Activated T-helper 2 cell treated with anti-CD3 and anti-CD28 coated beads, Interferon-gamma antibody, Interleukin-2, Interleukin-4, amounts not matched to agents 10 μg/mL and 5 μg/mL and 100 μg/mL, durations not matched to agents 14 hours and 24 hours and 36 hours (primary cell): ENCODE measurements at regions of chr14 and their contacts with region 1.

Region 1: DNA sequence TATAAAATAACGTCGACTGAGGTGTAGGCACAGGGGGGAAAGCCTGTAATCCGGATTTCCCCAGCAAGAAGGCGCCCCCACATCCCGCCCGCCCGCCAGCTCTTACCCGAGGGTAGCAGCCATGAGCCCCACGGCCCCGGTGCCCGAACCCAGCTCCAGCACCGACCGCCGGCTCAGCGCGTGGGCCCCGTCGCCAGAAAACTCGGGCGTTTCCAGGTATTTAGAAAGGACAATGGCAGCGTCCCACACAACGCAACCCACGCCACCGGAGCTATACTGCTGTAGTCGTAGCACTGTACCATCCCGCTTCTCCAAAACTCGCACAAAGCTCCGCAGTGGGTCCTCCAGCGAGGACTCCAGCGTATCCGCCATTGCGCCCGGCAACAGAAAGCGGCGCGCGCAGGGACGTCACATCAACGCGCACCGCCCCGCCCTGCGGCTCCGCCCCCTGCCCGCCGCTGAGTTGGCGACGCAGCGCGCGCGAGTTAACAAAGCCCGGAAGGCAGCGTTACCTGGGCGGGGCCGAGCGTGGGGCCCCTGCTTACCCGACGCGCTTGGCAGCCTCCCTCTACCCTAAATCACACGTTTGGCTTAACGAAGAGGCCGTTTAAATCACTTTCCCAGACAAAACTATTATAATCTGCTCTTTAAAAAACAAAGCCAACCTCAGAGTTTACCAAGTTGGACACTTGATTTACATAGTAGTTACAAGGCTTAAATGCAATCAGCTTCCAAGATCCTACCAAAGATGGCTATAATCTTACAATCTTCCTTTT is at the start of gene VCPKMT:
- DNase-seq: peak; percentile 94
- H3K4me3 Mint-ChIP-seq: peak within 1 kb of the TSS; percentile 97
- H3K27ac Mint-ChIP-seq: peak within 1 kb of the TSS; percentile 98
- H3K4me1 Mint-ChIP-seq: peaks cover 17% of the 10 kb centered on the region
- H3K27me3 Mint-ChIP-seq: no peaks in the 10 kb centered on the region
- total RNA-seq, gene VCPKMT: 9.7 and 10.1 TPM in 2 replicates

Region 2: DNA sequence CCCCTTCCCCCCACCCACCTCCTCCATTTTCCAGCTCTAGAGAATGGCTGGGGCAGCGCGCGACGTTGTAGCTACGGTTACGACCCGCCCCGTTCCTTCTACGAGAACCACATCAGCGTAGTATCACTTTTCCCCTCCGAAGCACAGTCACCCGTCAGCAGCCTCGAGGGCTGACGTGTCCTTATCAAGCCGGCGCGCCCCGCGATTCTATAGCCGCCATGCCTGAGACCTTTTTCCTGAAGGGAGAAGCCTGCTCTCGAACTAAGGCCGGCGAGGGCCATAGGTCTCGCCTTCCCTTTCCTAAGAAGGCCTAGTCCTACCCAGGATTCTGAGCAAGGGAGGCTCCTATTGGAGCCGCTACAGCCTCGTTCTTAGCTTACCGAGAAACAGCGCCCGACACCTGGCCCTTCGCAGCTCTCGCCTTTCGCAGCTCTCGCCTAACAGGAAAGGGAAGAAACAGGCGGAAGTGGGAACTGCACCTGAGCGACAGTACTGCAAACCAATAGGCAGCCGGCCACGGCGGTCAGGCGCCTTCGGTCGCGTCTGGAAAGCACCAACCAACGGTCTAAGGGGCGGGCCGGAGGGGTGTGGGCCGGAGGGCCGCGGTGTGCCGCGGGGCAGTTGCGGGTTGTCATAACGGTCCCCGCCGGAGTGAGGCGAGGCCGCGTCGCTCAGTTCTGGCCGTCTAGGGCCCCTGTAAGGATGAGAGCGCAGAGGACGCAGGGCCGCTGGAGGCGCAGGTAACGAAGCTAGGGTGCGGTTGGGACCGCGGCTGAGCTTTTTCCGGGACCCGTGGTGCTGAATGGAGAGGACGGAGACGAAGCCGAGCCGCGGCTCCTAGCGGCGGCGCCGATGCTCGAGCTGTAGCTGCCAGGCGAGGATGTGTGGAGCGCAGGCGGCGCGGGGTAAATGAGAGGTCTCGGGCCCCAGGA is 495.9 kb before region 1 on chr14 and contains the starts of genes MGAT2 and RPL36AL:
- intact Hi-C with region 1: loop called (anchors 5 kb)
- DNase-seq: peak; percentile 96
- H3K4me3 Mint-ChIP-seq: peak within 1 kb of the TSS; percentile 91
- H3K27ac Mint-ChIP-seq: peak within 1 kb of the TSS; percentile 94
- H3K4me1 Mint-ChIP-seq: peaks cover 44% of the 10 kb centered on the region
- H3K27me3 Mint-ChIP-seq: no peaks in the 10 kb centered on the region
- total RNA-seq, gene MGAT2: 57.0 and 57.9 TPM in 2 replicates
- total RNA-seq, gene RPL36AL: 278 and 292 TPM in 2 replicates

Region 3: GRCh38 chr14:49767562-49768300 is 348.6 kb before region 1 on chr14 and contains the start of gene KLHDC2:
- intact Hi-C with region 1: loop called (anchors 2 kb)
- DNase-seq: peak; percentile 89
- H3K4me3 Mint-ChIP-seq: peak within 1 kb of the TSS; percentile 96
- H3K27ac Mint-ChIP-seq: peak within 1 kb of the TSS; percentile 100
- H3K4me1 Mint-ChIP-seq: peaks cover 31% of the 10 kb centered on the region
- H3K27me3 Mint-ChIP-seq: no peaks in the 10 kb centered on the region
- total RNA-seq, gene KLHDC2: 28.9 and 31.6 TPM in 2 replicates

Region 4: DNA sequence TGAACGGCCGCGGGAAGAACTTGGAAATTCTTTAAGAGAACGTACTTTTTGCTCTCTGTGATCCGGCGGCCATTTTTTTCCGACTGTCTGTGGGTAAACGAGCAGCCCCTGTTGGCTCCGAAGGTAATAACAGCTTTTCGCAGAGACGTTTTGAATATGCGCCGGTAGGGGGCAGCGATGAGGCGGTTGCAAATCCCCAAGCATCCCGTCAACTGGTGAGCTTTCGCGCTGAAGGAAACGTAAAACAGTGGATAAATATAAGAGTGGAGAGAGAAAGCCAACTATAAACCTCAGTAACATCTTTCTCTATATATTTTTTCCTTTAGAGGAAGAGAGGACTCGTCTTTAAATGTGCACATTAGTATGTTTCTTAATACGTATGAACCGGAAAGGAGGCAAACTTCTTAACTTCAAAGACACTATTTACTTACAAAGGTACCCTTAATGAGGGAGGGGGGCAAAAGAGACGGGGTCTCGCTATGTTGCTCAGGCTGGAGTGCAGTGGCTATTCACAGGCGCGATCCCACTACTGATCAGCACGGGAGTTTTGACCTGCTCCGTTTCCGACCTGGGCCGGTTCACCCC is 254.2 kb before region 1 on chr14:
- intact Hi-C with region 1: loop called (anchors 5 kb)
- DNase-seq: peak; percentile 83
- H3K4me3 Mint-ChIP-seq: no peak overlapping the region
- H3K27ac Mint-ChIP-seq: no peak overlapping the region
- H3K4me1 Mint-ChIP-seq: peaks cover 16% of the 10 kb centered on the region
- H3K27me3 Mint-ChIP-seq: no peaks in the 10 kb centered on the region

Region 5: DNA sequence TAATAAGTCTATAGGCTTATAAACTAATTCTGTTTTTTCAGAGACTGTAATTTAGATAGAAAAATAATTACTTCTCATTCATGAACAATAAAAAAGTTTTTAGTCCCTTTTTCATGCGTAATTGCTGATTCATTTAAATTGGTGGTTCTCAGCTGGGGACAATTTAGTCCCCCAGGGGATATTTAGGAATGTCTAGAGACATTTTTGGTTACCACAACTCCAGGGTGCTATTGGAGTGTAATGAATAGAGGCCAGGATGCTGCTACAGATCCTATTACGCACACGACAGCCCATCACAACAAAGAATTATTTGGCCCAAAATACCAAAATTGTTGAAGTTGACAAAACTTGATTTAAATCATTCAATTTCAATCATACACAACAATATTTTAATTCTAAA is 22.8 kb after region 1 on chr14:
- intact Hi-C with region 1: no loop called
- DNase-seq: no peak
- H3K4me3 Mint-ChIP-seq: no peak overlapping the region
- H3K27ac Mint-ChIP-seq: no peak overlapping the region
- H3K4me1 Mint-ChIP-seq: no peaks in the 10 kb centered on the region
- H3K27me3 Mint-ChIP-seq: no peaks in the 10 kb centered on the region

Region 6: GRCh38 chr14:50311975-50312733 is 195.8 kb after region 1 on chr14 and contains the starts of genes DMAC2L and L2HGDH:
- intact Hi-C with region 1: loop called (anchors 10 kb)
- DNase-seq: peak; percentile 89
- H3K4me3 Mint-ChIP-seq: peak within 1 kb of the TSS; percentile 91
- H3K27ac Mint-ChIP-seq: peak within 1 kb of the TSS; percentile 98
- H3K4me1 Mint-ChIP-seq: peaks cover 47% of the 10 kb centered on the region
- H3K27me3 Mint-ChIP-seq: no peaks in the 10 kb centered on the region
- total RNA-seq, gene DMAC2L: 13.6 and 16.2 TPM in 2 replicates
- total RNA-seq, gene L2HGDH: 14.1 and 14.2 TPM in 2 replicates

Region 7: DNA sequence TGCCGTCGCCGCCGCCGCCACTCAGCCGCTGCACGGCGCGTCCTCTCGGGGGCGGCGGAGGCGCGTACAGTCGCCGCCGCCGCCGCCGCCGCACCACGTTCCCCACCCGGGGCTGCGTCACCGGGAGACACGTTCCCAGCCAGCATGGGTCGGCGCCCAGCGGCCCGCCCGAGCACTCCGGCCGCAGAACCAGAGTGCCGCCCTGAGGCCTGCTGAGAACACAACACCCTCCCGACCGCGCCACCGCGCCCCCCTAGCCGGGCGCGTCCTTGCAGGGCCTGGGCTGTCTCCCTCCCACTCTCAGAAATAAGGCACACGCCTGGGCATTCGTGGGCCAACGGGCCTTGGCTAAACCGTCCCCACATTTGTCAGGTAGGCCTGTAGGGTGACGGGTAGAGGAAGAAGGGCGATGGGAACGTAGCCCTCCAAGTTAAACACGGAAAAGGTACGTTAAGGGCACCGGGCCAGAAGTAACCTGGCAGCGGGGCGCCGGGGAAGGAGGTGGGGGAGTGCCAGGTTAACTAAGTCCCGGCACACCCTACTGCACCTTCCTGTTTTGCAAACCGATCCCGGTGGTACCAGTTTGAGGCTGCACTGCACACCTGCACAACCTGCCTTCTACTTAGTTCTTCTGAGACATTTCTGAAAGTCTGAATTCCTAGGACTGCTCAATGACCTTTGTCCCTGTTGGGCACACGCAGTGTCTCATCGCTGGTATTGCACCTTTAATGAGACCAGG is 416.3 kb after region 1 on chr14 and contains the start of gene MAP4K5:
- intact Hi-C with region 1: loop called (anchors 5 kb)
- DNase-seq: peak; percentile 82
- H3K4me3 Mint-ChIP-seq: peak within 1 kb of the TSS; percentile 88
- H3K27ac Mint-ChIP-seq: peak within 1 kb of the TSS; percentile 51
- H3K4me1 Mint-ChIP-seq: peaks cover 30% of the 10 kb centered on the region
- H3K27me3 Mint-ChIP-seq: peaks cover 34% of the 10 kb centered on the region
- total RNA-seq, gene MAP4K5: 21.0 and 23.1 TPM in 2 replicates